Heart right ventricle (tissue), 16 donors: ENCODE measurements at regions of chr6 and their contacts with region 1.

Region 1: DNA sequence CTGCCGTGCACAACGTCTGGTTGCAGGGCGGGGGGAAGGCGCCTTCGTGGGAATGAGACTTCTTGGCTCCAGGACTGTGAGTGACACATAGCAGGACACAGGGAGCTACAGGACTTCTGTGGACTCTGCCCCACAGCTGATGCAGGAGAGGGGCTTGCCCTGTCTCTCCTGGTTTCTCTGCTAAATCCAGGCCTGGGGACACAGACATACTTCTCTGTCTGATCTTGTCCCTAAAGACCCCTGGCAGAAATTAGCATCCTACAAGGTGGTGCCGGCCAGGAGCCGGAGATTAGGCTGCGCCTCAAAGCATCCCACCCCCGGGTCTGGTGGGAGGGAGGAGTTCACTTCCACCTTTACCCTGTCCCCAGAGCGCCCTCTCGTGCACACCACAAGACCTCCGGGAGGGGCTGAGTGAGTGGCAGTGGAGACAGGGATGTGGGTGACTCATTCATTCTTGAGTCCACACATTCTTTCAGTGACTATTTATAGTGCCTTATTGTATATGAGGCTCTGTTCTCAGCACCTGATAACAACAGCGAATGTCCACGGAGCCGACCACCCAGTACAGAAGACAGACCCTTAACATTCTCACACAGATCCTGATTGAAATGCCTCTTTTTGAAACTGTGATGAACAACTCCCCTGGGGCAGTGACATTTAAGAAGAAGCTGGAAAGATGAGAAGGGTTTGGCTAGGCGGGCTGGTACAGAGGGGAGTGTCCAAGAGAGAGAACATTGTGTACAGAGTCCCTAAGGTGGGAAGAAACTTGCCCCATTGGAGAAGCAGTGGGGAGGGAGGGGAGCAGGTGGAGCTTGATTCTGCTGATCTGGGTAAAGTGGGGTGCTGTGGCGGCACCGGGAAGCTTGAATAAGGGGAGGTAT is 39.0 kb downstream of the GMPR start:
- DNase-seq: peak; percentile 70 to 78
- ATAC-seq: peak; percentile 85 to 95 (median 92)
- H3K4me3 ChIP-seq: no peak overlapping the region
- H3K27ac ChIP-seq: peak overlapping the region; percentile 36 to 84 (median 82)
- H3K4me1 ChIP-seq: peaks cover 4 to 49% (median 17%) of the 10 kb centered on the region in 9 donors
- H3K27me3 ChIP-seq: no peaks in the 10 kb centered on the region
- CTCF ChIP-seq: peak in 8 of 9 donors; percentile 30 to 69 (median 51)

Region 2: DNA sequence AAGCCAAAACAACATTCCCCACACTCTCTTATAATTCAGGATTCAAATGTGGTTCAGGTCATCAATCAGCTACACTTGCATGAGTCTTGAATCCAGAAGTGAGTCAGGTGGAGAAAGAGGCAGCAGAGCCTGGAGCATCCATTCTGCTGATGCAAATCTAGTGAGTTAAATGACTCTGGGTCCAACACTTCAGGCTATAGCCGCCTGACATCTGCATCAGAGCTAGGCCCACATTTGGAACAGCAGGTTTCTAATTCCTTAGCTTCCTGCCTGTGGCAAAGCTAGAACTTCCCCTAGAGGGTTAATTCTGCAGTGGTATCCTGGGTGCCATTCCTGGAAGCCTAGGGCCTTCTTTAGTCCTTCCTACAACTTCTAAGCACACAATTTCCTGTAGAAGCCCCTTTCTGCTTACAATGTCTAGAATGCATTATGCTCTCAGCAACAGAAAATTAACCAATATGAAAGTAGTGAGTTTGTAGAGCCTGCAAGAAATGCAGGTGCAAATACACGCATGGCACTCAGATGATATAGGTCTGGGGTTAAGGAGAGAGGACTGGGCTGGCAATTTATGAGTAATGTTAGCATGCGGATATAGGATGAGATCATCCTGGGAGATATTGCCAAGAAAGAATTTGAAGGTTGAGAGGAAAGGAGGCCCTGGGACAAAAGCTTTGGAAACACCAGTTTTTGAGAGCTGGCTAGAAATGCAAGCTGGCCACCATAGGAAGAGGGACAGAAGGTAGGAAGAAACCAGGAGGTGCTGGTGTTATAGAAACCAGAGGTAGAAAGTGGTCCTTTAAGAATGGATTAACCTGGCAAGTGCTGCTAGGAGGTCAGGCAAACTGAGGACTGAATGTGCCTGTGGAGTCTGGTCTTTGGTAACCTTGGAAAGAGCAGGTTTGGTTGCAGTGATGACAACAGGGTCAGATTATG is 331.8 kb before region 1 on chr6:
- intact Hi-C with region 1: no loop called
- DNase-seq: no peak
- ATAC-seq: no peak
- H3K4me3 ChIP-seq: no peak overlapping the region
- H3K27ac ChIP-seq: no peak overlapping the region
- H3K4me1 ChIP-seq: peaks cover 0 to 8% (median 3%) of the 10 kb centered on the region in 9 donors
- H3K27me3 ChIP-seq: no peaks in the 10 kb centered on the region
- CTCF ChIP-seq: no peak

Region 3: GRCh38 chr6:16238057-16238962 is 39.0 kb before region 1 on chr6 and contains the start of gene GMPR:
- intact Hi-C with region 1: loop called in 5 of 10 experiments (anchors 1 to 5 kb)
- DNase-seq: peak; percentile 81 to 86
- ATAC-seq: peak; percentile 72 to 90 (median 80)
- H3K4me3 ChIP-seq: peak within 1 kb of the TSS; percentile 46 to 87 (median 76)
- H3K27ac ChIP-seq: peak within 1 kb of the TSS; percentile 77 to 94 (median 86)
- H3K4me1 ChIP-seq: peaks cover 2 to 66% (median 43%) of the 10 kb centered on the region in 9 donors
- H3K27me3 ChIP-seq: no peaks in the 10 kb centered on the region
- CTCF ChIP-seq: peak in 3 of 9 donors; percentile 24 to 35 (median 24)
- total RNA-seq, gene GMPR: 74.1 to 139 (median 96.8) TPM

Region 4: GRCh38 chr6:16244869-16245451 is 32.4 kb before region 1 on chr6:
- intact Hi-C with region 1: loop called in 3 of 10 experiments (anchors 2 to 5 kb)
- DNase-seq: no peak
- ATAC-seq: peak; percentile 6 to 70 (median 52)
- H3K4me3 ChIP-seq: no peak overlapping the region
- H3K27ac ChIP-seq: peak overlapping the region; percentile 63 to 94 (median 86)
- H3K4me1 ChIP-seq: peaks cover 14 to 70% (median 42%) of the 10 kb centered on the region in 9 donors
- H3K27me3 ChIP-seq: no peaks in the 10 kb centered on the region
- CTCF ChIP-seq: no peak